Esophagus squamous epithelium (tissue), 5 donors: ENCODE measurements at regions of chr12 and their contacts with region 1.

Region 1: DNA sequence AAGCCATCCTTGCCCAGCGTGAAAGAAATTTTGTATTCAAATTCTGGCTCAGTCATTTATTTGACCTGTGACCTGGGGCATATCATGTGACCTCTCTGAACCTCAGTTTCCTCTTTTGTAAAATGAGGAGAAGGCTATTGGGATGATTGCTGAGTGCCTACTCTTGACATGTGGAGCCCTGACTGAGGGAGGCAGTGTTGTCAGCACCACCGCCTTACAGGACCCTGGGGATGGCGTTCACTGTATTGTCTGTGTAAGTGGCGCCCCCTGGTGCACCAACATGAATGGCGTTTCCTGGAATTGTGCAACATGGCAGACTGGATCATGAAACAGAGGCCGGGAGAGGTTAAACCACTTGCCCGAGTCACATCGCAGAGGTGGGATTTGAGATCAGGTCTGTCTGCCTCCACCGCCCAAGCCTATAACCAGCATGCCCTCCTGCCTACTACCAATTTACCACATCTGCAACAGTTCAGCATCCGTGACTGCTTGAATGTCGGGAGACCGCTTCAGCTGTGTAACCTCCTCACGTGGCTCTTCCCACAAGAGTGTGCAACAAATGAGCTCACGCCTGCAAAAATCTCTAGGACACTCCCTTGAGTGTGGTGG is 20.1 kb upstream of the CCDC63 start:
- DNase-seq: peak; percentile 28
- H3K4me3 ChIP-seq: peak overlapping the region in 1 of 4 donors; percentile 49
- H3K27ac ChIP-seq: no peak overlapping the region
- H3K4me1 ChIP-seq: peaks cover 0 to 8% (median 0%) of the 10 kb centered on the region in 3 donors
- H3K27me3 ChIP-seq: peaks cover 0 to 5% (median 0%) of the 10 kb centered on the region in 4 donors
- CTCF ChIP-seq: peak; percentile 73 to 89 (median 82)
- POLR2A ChIP-seq: no peak

Region 2: GRCh38 chr12:110627500-110628195 is 199.0 kb before region 1 on chr12:
- intact Hi-C with region 1: loop called (anchors 10 kb)
- DNase-seq: no peak
- H3K4me3 ChIP-seq: no peak overlapping the region
- H3K27ac ChIP-seq: no peak overlapping the region
- H3K4me1 ChIP-seq: no peaks in the 10 kb centered on the region
- H3K27me3 ChIP-seq: no peaks in the 10 kb centered on the region
- CTCF ChIP-seq: no peak
- POLR2A ChIP-seq: no peak